ENCODE measurements at regions of chr16 and their contacts with region 1.

Region 1: DNA sequence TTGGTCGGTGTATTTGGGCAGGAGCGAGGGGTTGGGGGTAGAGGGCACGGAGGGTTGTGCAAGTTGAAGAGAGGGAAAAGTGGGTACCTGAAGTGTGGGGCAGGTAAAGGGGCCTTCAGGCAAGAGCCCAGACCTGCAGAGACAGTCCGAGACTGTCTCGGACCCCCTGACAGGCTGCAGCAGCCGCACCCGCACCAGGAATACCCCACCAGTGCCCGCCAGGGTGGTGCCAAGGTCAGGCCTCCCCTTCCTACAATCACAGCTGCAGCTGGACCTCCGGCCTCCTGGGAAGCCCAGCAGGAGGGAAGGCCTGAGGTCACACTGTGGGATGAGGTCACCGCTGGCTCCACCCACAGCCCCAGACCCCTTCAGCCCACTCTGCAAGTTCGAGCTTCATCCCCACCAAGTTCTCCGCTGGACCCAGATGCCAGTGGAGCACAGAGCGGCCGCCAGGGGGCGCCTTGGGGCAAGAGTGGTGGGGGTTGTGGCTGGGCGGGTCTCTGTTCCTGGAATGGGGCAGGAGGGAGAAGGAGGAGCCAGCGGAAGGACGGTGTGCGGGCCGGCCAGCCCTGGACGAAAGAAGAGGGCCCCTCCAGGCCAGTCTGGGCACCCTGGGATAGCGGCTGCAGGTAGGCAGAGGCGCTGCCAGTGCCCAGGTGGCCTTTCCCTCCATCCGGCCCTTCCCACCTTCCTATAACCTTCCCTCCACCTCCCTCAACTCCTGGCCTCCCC is at the start of gene HSD3B7:
- DNase-seq: peak; percentile 25 to 83 (median 70)
- ATAC-seq: peak; percentile 70 to 80 (median 77)
- H3K4me3 ChIP-seq: no peak within 1 kb of the TSS
- H3K4me3 Mint-ChIP-seq: no peak within 1 kb of the TSS
- H3K27ac ChIP-seq: no peak within 1 kb of the TSS
- H3K27ac Mint-ChIP-seq: no peak within 1 kb of the TSS
- H3K4me1 ChIP-seq: peaks cover 0 to 9% of the 10 kb centered on the region in 2 experiments
- H3K4me1 Mint-ChIP-seq: peaks cover 0 to 1% (median 0%) of the 10 kb centered on the region in 3 donors
- H3K27me3 ChIP-seq: no peaks in the 10 kb centered on the region
- H3K27me3 Mint-ChIP-seq: no peaks in the 10 kb centered on the region
- total RNA-seq, gene HSD3B7: 0.33 to 3.5 (median 1.3) TPM

Region 2: GRCh38 chr16:30892680-30893416 is 92.0 kb before region 1 on chr16:
- CTCF ChIA-PET with region 1: interaction called in 1 of 2 experiments, 11 read pairs
- POLR2A ChIA-PET with region 1: no interaction called
- DNase-seq: peak in 1 of 35 experiments; percentile 19
- ATAC-seq: no peak
- H3K4me3 ChIP-seq: peak overlapping the region; percentile 79 to 80
- H3K4me3 Mint-ChIP-seq: peak overlapping the region; percentile 81 to 90 (median 87)
- H3K27ac ChIP-seq: peak overlapping the region; percentile 76
- H3K27ac Mint-ChIP-seq: peak overlapping the region; percentile 89 to 96
- H3K4me1 ChIP-seq: peaks cover 13 to 43% of the 10 kb centered on the region in 2 experiments
- H3K4me1 Mint-ChIP-seq: peaks cover 40 to 47% (median 45%) of the 10 kb centered on the region in 3 donors
- H3K27me3 ChIP-seq: no peaks in the 10 kb centered on the region
- H3K27me3 Mint-ChIP-seq: no peaks in the 10 kb centered on the region